ENCODE measurements at regions of chr20 and their contacts with region 1.

Region 1: DNA sequence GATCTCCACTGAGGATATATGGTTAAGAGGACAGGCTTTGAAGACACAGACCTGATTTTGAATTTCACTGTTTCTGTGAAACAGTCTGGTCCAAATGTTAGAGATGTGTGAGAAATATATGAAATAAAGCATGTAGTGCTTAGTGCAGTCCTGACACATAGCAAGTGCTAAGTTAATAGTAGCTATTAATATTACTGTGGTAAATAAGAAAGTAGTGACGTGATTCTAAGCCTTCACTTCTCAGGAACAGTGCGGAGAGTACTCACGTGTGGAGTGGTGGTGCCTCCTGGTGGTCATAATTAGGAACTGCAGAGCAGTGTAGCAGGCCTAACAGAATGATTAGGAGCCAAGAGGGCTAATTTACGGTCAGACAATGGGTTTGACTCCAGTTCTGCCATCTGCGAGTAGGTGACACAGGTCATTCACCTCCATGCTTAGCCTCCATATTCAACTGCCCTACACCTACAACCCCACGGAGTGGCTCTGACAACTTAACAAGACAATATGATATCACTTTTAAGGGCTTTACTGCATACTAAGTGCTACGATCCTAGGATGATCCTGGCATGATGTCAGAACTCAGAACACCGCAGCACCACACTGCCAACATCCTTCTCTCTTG is 106.2 kb downstream of the JPH2 start:
- DNase-seq: peak; percentile 92
- H3K4me3 Mint-ChIP-seq: no peak overlapping the region
- H3K27ac Mint-ChIP-seq: peak overlapping the region; percentile 13
- H3K4me1 Mint-ChIP-seq: peaks cover 21% of the 10 kb centered on the region
- H3K27me3 Mint-ChIP-seq: peaks cover 2% of the 10 kb centered on the region

Region 2: GRCh38 chr20:43537921-43538877 is 542.6 kb before region 1 on chr20:
- intact Hi-C with region 1: loop called (anchors 1 kb)
- DNase-seq: peak; percentile 83
- H3K4me3 Mint-ChIP-seq: no peak overlapping the region
- H3K27ac Mint-ChIP-seq: no peak overlapping the region
- H3K4me1 Mint-ChIP-seq: no peaks in the 10 kb centered on the region
- H3K27me3 Mint-ChIP-seq: no peaks in the 10 kb centered on the region

Region 3: GRCh38 chr20:43925801-43926200 is 155.0 kb before region 1 on chr20:
- intact Hi-C with region 1: loop called (anchors 5 kb)
- DNase-seq: no peak
- H3K4me3 Mint-ChIP-seq: peak overlapping the region; percentile 23
- H3K27ac Mint-ChIP-seq: no peak overlapping the region
- H3K4me1 Mint-ChIP-seq: peaks cover 50% of the 10 kb centered on the region
- H3K27me3 Mint-ChIP-seq: peaks cover 35% of the 10 kb centered on the region

Region 4: GRCh38 chr20:43983359-43983758 is 97.4 kb before region 1 on chr20:
- intact Hi-C with region 1: loop called (anchors 1 kb)
- DNase-seq: peak; percentile 76
- H3K4me3 Mint-ChIP-seq: no peak overlapping the region
- H3K27ac Mint-ChIP-seq: no peak overlapping the region
- H3K4me1 Mint-ChIP-seq: peaks cover 14% of the 10 kb centered on the region
- H3K27me3 Mint-ChIP-seq: peaks cover 16% of the 10 kb centered on the region

Region 5: DNA sequence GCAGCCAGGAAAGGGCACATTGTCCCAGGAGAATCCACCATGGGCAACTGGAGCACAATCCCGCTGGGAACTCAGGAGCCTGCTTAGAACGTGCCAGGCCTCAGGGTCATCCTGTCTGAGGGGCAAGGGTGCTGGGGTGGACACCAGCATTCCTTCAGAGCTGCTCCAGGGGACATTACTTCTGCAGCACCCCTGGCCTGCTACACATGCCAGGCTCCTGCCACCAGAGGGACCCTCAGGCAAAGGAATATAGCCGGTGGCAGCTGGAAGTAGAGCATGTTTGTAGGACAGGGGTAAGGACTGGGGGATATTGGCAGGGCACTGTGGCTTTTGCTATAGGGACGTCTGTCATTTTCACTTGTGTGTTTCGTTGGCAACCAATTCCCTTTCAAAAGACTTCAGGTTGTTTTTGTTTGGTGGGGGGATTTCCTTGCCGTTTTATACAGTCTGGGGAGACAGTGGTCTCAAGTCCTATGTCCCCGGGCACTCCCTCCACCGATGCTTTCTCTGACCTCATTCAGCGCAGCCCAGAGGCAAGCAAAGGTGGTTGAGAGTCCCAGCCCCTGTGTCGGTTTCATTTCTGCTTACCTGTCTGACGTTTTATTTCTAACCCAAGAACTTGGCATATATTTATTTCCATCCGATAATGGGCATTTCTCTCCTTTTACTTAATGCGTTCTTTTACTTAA is 24.6 kb before region 1 on chr20:
- intact Hi-C with region 1: loop called (anchors 1 kb)
- DNase-seq: peak; percentile 86
- H3K4me3 Mint-ChIP-seq: no peak overlapping the region
- H3K27ac Mint-ChIP-seq: no peak overlapping the region
- H3K4me1 Mint-ChIP-seq: peaks cover 8% of the 10 kb centered on the region
- H3K27me3 Mint-ChIP-seq: peaks cover 11% of the 10 kb centered on the region